MCF 10A (cell line): ENCODE measurements at regions of chr1 and their contacts with region 1.

Region 1: DNA sequence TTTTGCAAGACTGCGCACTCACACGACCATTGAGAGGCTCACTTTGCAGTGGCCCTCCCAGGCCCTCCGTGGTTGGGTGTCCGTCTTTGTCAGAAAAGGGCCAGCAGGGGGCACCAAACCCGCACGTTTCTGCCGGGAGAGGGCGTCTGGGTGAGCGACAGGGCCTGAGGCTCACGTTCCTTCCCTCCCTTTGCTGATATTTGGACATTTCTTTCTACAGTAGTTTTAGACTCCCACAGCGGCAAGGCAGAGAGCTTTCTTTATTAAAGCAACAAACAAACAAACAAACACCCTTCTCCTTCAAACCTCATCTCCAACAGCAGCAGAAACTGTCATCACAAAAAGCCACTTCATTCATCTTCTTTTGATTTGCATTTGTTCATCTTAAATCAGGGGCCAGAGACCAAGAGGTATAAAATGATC is 79.2 kb upstream of the WDR26 start:
- DNase-seq: peak; percentile 97
- H3K4me3 Mint-ChIP-seq: no peak overlapping the region
- H3K27ac Mint-ChIP-seq: no peak overlapping the region
- H3K4me1 Mint-ChIP-seq: peaks cover 14% of the 10 kb centered on the region
- H3K27me3 Mint-ChIP-seq: no peaks in the 10 kb centered on the region
- CTCF ChIP-seq: peak; percentile 100

Region 2: DNA sequence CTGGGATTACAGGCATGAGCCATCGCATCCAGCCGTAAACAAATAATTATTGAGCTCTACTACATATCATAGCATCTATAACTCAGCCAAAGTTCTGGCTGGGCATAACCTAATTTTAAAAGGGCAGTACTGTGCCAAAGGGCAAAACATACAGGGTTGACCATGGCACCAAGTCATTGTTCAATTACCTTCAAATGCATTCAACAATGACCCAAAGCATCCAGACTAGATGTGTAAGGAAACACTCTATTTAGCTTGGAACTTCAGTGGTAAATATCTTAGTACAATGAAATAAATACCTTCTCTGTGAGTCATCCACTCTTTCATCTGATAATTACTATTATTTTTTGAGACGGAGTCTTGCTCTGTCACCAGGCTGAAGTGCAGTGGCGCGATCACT is 253.9 kb before region 1 on chr1:
- CTCF ChIA-PET with region 1: no interaction called
- POLR2A ChIA-PET with region 1: no interaction called
- intact Hi-C with region 1: no loop called
- DNase-seq: no peak
- H3K4me3 Mint-ChIP-seq: no peak overlapping the region
- H3K27ac Mint-ChIP-seq: no peak overlapping the region
- H3K4me1 Mint-ChIP-seq: no peaks in the 10 kb centered on the region
- H3K27me3 Mint-ChIP-seq: no peaks in the 10 kb centered on the region
- CTCF ChIP-seq: no peak

Region 3: DNA sequence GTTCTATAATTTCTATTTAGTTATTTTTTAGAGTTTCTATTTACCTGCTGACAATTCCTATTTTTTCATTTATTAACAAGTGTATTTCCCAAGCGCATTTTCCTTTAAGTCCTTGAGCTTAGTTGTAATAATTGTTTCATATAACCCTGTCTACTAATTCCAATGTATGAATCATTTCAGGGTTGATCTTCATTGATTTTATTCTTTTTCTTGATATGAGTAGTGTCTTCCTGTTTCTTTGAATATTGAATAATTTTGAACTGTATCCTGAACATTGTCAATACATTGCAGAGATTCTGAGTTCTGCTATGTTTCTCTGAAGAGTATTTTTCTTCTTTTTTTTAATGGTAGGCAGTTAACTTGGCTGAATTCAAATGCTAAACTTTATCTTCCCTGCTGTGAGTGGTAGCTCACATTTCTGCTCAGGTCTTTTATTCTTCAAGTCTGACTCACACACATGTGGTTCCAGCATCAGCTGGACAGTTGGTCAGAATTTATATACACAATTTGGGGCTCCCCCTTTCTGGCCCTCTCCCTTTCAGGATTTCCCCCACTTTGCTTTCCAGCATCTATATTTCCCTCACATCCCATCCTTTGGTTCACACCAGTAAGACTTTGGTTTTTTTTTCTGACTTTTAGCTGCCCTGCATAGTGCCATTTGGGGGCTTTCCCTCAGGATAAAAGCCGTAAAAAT is 24.8 kb before region 1 on chr1:
- CTCF ChIA-PET with region 1: interaction called, 15 read pairs
- POLR2A ChIA-PET with region 1: no interaction called
- intact Hi-C with region 1: no loop called
- DNase-seq: peak; percentile 56
- H3K4me3 Mint-ChIP-seq: no peak overlapping the region
- H3K27ac Mint-ChIP-seq: peak overlapping the region; percentile 61
- H3K4me1 Mint-ChIP-seq: peaks cover 28% of the 10 kb centered on the region
- H3K27me3 Mint-ChIP-seq: no peaks in the 10 kb centered on the region
- CTCF ChIP-seq: no peak

Region 4: DNA sequence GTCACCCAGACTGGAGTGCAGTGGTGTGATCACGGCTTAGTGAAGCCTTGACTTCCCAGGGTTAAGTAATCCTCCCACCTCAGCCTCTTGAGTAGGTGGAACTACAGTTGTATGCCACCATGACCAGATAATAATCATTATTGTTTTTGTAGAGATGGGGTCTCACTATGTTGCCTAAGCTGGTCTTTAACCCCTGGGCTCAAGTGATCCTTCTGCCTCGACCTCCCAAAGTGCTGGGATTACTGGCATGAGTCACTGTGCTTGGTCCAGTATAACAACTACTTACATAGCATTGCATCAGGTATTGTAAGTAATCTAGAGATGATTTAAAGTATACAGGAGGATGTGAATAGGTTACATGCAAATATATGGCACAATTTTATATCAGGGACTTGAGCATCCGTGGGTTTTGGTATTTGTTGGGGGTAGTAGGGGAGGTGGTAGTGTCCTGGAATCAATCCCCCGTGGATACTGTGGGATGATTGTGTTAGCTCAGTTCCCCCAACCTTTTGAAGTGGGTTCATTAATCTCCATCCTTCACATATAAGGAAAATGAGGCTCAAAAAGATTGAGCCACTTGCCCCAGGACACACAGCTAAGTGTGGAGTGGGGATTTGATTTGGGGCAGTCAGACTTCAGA is 40.9 kb after region 1 on chr1:
- CTCF ChIA-PET with region 1: interaction called, 23 read pairs
- POLR2A ChIA-PET with region 1: no interaction called
- intact Hi-C with region 1: no loop called
- DNase-seq: no peak
- H3K4me3 Mint-ChIP-seq: no peak overlapping the region
- H3K27ac Mint-ChIP-seq: peak overlapping the region; percentile 20
- H3K4me1 Mint-ChIP-seq: peaks cover 22% of the 10 kb centered on the region
- H3K27me3 Mint-ChIP-seq: no peaks in the 10 kb centered on the region
- CTCF ChIP-seq: no peak

Region 5: DNA sequence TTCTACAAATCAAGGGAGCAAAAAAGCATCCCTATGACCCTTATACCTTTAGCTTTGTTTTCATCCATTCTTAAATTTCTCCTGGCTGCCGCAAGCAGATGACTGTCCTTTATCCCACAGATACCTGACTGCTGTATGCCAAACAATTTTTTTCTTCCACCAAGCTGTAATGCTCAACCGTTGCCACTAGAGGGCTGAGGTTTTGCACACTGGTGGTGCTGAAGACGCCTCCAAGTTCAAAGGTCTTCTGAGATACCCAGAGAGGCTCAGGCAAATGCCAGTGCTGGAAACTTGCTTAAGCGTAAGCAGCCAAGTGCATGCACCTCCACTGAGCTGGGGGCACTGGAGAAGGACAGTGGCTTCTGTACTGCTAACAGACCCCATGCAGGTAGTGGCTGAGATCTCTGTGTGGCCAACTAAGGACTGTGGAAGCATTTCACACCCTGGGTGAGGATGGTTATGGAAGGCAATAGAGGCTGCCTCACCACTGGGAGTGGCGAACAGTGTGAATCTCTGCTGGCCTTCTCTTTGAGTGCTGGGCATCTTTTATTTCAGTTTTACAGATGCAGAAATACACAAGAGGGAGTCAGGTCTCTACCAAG is 130.9 kb after region 1 on chr1:
- CTCF ChIA-PET with region 1: interaction called, 342 read pairs
- POLR2A ChIA-PET with region 1: no interaction called
- intact Hi-C with region 1: loop called (anchors 2 kb)
- DNase-seq: peak; percentile 83
- H3K4me3 Mint-ChIP-seq: no peak overlapping the region
- H3K27ac Mint-ChIP-seq: no peak overlapping the region
- H3K4me1 Mint-ChIP-seq: no peaks in the 10 kb centered on the region
- H3K27me3 Mint-ChIP-seq: peaks cover 21% of the 10 kb centered on the region
- CTCF ChIP-seq: peak; percentile 97

Region 6: GRCh38 chr1:224828691-224829090 is 314.9 kb after region 1 on chr1:
- CTCF ChIA-PET with region 1: interaction called, 10 read pairs
- POLR2A ChIA-PET with region 1: no interaction called
- intact Hi-C with region 1: no loop called
- DNase-seq: no peak
- H3K4me3 Mint-ChIP-seq: no peak overlapping the region
- H3K27ac Mint-ChIP-seq: no peak overlapping the region
- H3K4me1 Mint-ChIP-seq: no peaks in the 10 kb centered on the region
- H3K27me3 Mint-ChIP-seq: no peaks in the 10 kb centered on the region
- CTCF ChIP-seq: no peak

Region 7: GRCh38 chr1:224894918-224895317 is 381.1 kb after region 1 on chr1:
- CTCF ChIA-PET with region 1: interaction called, 60 read pairs
- POLR2A ChIA-PET with region 1: interaction called, 4 read pairs
- intact Hi-C with region 1: no loop called
- DNase-seq: peak; percentile 62
- H3K4me3 Mint-ChIP-seq: no peak overlapping the region
- H3K27ac Mint-ChIP-seq: no peak overlapping the region
- H3K4me1 Mint-ChIP-seq: no peaks in the 10 kb centered on the region
- H3K27me3 Mint-ChIP-seq: peaks cover 9% of the 10 kb centered on the region
- CTCF ChIP-seq: peak; percentile 47

Region 8: GRCh38 chr1:225567590-225568194 is 1053.9 kb after region 1 on chr1:
- CTCF ChIA-PET with region 1: no interaction called
- POLR2A ChIA-PET with region 1: no interaction called
- intact Hi-C with region 1: no loop called
- DNase-seq: peak; percentile 44
- H3K4me3 Mint-ChIP-seq: no peak overlapping the region
- H3K27ac Mint-ChIP-seq: no peak overlapping the region
- H3K4me1 Mint-ChIP-seq: peaks cover 13% of the 10 kb centered on the region
- H3K27me3 Mint-ChIP-seq: no peaks in the 10 kb centered on the region
- CTCF ChIP-seq: peak; percentile 20